Endothelial cell of umbilical vein (primary cell): ENCODE measurements at regions of chr9 and their contacts with region 1.

Region 1: DNA sequence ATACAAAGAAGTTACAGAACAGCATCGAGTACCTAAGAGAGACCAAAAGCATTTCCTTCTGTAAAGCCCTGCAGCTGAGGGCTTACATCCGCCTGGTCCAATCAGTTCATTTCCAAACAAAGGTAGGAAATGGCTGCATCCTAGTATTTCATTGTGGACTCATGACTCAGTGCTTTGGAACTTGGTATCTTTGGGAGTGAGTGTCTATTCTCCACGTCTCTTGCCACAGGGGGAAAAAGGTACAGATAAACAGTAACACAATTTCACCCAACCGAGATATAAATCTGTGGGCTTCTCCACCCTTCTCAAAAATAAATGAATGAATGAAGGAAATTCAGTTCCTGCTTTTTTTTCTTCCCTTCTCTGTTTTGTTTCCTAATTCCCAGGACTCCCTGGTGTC is 75.4 kb downstream of the NFIB start:
- DNase-seq: peak; percentile 98
- H3K4me3 ChIP-seq: peak overlapping the region in 1 of 3 experiments; percentile 44
- H3K27ac ChIP-seq: peak overlapping the region; percentile 97
- H3K4me1 ChIP-seq: peaks cover 72% of the 10 kb centered on the region
- H3K27me3 ChIP-seq: no peaks in the 10 kb centered on the region
- CTCF ChIP-seq: no peak
- POLR2A ChIP-seq: peak; percentile 85

Region 2: GRCh38 chr9:13351778-13352386 is 886.7 kb before region 1 on chr9:
- CTCF ChIA-PET with region 1: no interaction called
- POLR2A ChIA-PET with region 1: no interaction called
- dilution Hi-C with region 1: no loop called
- intact Hi-C with region 1: loop called (anchors 10 kb)
- DNase-seq: peak; percentile 74
- H3K4me3 ChIP-seq: no peak overlapping the region
- H3K27ac ChIP-seq: no peak overlapping the region
- H3K4me1 ChIP-seq: no peaks in the 10 kb centered on the region
- H3K27me3 ChIP-seq: no peaks in the 10 kb centered on the region
- CTCF ChIP-seq: peak; percentile 32 to 37
- POLR2A ChIP-seq: no peak

Region 3: DNA sequence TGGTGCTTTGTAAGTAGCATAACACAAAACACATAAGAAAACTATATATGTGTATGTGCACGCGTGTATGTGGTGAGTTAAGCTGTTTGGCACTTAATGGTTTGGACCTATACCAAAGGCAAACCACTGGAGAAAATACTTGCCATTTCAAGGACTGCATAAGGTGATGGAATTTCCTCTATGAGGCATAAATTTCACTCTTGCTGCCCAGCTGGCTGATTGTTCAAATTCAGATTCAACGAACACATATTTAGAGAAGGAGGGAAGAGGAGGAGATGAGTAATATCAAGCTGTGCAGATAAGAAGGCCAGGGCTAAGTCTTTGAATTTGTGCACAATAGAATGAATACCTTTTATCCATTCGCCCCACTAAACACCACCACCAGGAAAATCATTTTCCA is 488.5 kb before region 1 on chr9:
- CTCF ChIA-PET with region 1: no interaction called
- POLR2A ChIA-PET with region 1: no interaction called
- dilution Hi-C with region 1: no loop called
- intact Hi-C with region 1: loop called (anchors 1 kb)
- DNase-seq: peak; percentile 96
- H3K4me3 ChIP-seq: no peak overlapping the region
- H3K27ac ChIP-seq: peak overlapping the region; percentile 72
- H3K4me1 ChIP-seq: peaks cover 17% of the 10 kb centered on the region
- H3K27me3 ChIP-seq: no peaks in the 10 kb centered on the region
- CTCF ChIP-seq: no peak
- POLR2A ChIP-seq: peak; percentile 49

Region 4: DNA sequence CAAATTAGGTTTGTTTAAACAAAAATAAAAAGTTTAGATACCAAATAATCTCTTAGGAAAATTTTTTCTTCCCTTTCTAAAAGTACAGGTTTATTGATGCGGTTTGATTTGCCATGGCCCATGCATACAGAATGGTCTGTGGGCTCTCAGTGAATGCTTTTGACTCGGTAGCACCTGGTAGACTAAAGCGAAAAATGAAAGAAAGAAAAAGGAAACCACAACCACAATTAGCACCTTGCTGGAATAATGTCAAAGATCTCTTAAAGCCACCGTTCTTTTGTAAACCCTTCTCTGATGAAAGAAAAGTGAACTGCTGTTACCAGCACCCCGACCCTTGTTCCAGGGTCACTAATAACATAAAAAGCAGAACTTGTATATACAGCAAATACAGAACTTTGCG is 82.5 kb before region 1 on chr9:
- CTCF ChIA-PET with region 1: interaction called, 3 read pairs
- POLR2A ChIA-PET with region 1: no interaction called
- dilution Hi-C with region 1: no loop called
- intact Hi-C with region 1: loop called (anchors 10 kb)
- DNase-seq: no peak
- H3K4me3 ChIP-seq: no peak overlapping the region
- H3K27ac ChIP-seq: peak overlapping the region; percentile 77
- H3K4me1 ChIP-seq: peaks cover 62% of the 10 kb centered on the region
- H3K27me3 ChIP-seq: no peaks in the 10 kb centered on the region
- CTCF ChIP-seq: no peak
- POLR2A ChIP-seq: no peak

Region 5: DNA sequence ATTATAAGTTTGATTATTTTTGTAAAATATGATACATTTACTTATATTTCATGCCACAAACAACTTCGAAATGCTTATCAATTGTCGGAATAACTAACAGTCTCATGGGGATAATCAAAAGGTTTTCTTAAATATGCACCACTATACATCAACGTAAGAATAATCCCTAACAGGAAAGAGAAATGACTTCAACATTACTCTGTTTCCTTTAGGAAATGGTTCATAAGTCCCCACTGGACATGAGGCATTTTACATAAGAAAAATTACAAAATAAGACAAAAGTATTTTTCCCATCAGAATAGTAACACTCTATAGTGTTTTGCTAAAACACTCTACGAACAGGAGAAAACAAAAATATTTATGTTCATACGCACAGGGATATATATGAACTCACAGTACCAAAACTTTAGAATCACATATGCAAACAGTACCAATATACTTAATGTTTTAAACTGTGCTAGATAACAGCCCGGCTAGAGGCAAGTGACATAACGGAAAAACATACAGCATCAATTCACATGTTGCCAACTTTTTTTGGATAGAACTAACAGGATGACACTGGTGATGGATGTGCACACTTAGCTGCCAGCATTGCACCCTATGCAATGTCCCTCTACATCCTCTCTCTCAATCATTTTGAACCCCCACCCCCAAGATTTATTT is 45.1 kb before region 1 on chr9:
- CTCF ChIA-PET with region 1: no interaction called
- POLR2A ChIA-PET with region 1: no interaction called
- dilution Hi-C with region 1: no loop called
- intact Hi-C with region 1: loop called (anchors 1 kb)
- DNase-seq: peak; percentile 90
- H3K4me3 ChIP-seq: peak overlapping the region in 2 of 3 experiments; percentile 21 to 55
- H3K27ac ChIP-seq: peak overlapping the region; percentile 97
- H3K4me1 ChIP-seq: peaks cover 64% of the 10 kb centered on the region
- H3K27me3 ChIP-seq: no peaks in the 10 kb centered on the region
- CTCF ChIP-seq: no peak
- POLR2A ChIP-seq: no peak

Region 6: GRCh38 chr9:14221558-14221957 is 17.0 kb before region 1 on chr9:
- CTCF ChIA-PET with region 1: interaction called, 10 read pairs
- POLR2A ChIA-PET with region 1: interaction called, 6 read pairs
- dilution Hi-C with region 1: no loop called
- intact Hi-C with region 1: no loop called
- DNase-seq: peak; percentile 86
- H3K4me3 ChIP-seq: no peak overlapping the region
- H3K27ac ChIP-seq: peak overlapping the region; percentile 86
- H3K4me1 ChIP-seq: peaks cover 50% of the 10 kb centered on the region
- H3K27me3 ChIP-seq: no peaks in the 10 kb centered on the region
- CTCF ChIP-seq: no peak
- POLR2A ChIP-seq: no peak